Calu3 (cell line): ENCODE measurements at regions of chr19 and their contacts with region 1.

Region 1: GRCh38 chr19:47075179-47075810 is 26.9 kb upstream of the TMEM160 start:
- DNase-seq: no peak
- H3K4me3 Mint-ChIP-seq: no peak overlapping the region
- H3K27ac Mint-ChIP-seq: no peak overlapping the region
- H3K4me1 Mint-ChIP-seq: no peaks in the 10 kb centered on the region
- H3K27me3 Mint-ChIP-seq: no peaks in the 10 kb centered on the region
- CTCF ChIP-seq: no peak

Region 2: GRCh38 chr19:47039239-47039874 is 35.9 kb before region 1 on chr19:
- CTCF ChIA-PET with region 1: no interaction called
- intact Hi-C with region 1: no loop called
- DNase-seq: no peak
- H3K4me3 Mint-ChIP-seq: no peak overlapping the region
- H3K27ac Mint-ChIP-seq: no peak overlapping the region
- H3K4me1 Mint-ChIP-seq: peaks cover 16% of the 10 kb centered on the region
- H3K27me3 Mint-ChIP-seq: no peaks in the 10 kb centered on the region
- CTCF ChIP-seq: no peak

Region 3: DNA sequence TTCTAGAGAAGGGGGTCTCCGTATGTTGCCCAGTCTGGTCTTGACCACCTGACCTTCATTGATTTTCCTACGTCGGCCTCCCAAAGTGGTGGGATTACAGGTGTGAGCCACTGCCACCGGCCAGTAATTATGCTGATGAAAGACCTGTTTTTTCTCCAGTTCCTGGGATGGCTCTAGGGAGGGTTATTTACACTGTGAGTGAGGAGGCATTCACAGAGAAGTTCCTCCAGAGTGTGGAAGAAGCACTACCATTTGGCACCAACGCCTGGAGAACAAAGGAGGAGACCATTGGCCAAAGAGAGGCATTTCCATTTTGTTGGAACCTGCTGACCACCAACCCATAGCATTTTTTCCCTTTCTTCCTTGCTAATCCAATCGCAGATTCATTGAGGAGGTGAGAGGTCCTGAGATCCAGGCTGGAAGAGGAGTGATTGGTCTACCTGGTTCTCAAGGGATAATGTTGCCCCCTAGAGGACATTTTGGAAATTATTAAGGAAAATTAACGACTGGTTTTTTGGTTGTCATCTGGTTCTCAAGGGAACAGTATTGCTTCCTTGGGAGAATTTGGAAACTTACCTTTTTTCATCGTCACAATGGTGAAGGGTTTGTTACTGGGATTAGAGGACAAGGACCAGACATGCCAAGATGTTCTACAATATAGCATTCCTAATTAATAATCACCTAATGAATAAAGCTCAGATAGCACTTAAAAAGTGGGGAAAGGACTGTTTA is 49.8 kb after region 1 on chr19:
- CTCF ChIA-PET with region 1: interaction called, 37 read pairs
- intact Hi-C with region 1: loop called (anchors 1 kb)
- DNase-seq: peak; percentile 45
- H3K4me3 Mint-ChIP-seq: no peak overlapping the region
- H3K27ac Mint-ChIP-seq: peak overlapping the region; percentile 33
- H3K4me1 Mint-ChIP-seq: peaks cover 30% of the 10 kb centered on the region
- H3K27me3 Mint-ChIP-seq: no peaks in the 10 kb centered on the region
- CTCF ChIP-seq: peak; percentile 61

Region 4: DNA sequence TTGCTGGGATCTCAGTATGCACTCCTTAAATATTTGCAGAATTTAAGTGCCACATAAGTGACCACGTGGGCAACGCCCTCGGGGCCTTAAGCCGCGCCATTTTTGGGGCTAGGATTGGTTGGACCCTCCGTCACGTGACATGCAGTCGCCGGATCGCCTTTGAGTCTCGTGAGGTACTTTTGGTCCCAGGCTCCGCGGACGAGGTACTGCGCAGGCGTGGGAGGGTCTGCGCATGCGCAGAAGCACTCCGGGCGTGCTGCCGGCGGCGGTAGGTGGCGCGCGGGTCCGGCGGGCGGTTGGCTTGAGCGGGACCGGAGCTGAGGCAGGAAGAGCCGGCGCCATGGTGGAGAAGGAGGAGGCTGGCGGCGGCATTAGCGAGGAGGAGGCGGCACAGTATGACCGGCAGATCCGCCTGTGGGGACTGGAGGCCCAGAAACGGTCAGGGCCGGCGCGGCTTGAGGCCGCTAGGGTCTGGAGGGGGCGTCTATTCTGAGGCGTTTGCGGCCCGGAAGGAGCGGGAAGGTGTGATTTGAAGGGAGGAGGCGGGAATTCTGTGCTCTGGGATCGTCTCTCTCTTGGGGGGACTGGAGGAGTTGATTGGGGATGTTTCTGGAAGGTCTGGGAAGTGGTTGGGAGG is 55.4 kb after region 1 on chr19 and contains the start of gene SAE1:
- CTCF ChIA-PET with region 1: interaction called, 21 read pairs
- intact Hi-C with region 1: loop called (anchors 1 kb)
- DNase-seq: peak; percentile 99
- H3K4me3 Mint-ChIP-seq: peak within 1 kb of the TSS; percentile 95
- H3K27ac Mint-ChIP-seq: peak within 1 kb of the TSS; percentile 85
- H3K4me1 Mint-ChIP-seq: peaks cover 38% of the 10 kb centered on the region
- H3K27me3 Mint-ChIP-seq: no peaks in the 10 kb centered on the region
- CTCF ChIP-seq: no peak
- total RNA-seq, gene SAE1: 169 and 174 TPM in 2 replicates